ENCODE measurements at regions of chr12 and their contacts with region 1.

Region 1: DNA sequence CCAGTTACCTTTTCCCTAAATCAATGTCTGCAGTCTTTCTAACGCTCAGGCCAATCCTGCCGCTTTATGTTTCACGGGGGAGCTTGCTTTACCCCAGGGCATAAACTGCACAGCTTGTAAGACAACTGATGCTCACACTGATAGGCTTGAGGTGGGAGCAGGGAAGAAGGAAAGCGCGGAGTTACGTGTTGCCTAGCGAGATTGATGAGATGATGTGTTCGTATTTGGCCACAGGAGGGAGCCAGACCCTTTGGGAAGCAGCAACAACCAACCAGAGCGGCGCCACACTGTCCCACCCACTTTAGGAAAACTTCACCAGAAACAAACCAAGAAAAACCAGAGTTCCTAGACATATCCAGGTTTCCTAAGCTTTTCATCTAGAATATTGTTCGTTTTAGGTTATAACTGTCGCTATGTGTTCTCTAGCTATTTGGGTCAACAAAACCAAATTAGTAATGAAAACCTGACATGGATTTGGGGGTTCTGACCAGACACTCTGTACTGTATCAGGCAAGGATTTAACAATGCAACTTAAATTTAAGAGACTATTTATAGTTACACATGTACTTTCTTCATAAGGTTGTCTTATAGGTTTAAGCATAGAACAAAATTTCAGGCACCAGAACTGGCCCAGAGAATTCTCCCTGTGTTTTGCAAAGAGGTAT is 2.4 kb downstream of the IL26 start:
- ATAC-seq: peak; percentile 94 to 100 (median 98)
- H3K4me3 ChIP-seq: no peak overlapping the region
- H3K27ac ChIP-seq: no peak overlapping the region
- H3K4me1 ChIP-seq: no peaks in the 10 kb centered on the region

Region 2: GRCh38 chr12:68303850-68304249 is 80.6 kb after region 1 on chr12:
- in situ Hi-C with region 1: loop called in 1 of 9 experiments (anchors 10 kb)
- ATAC-seq: no peak
- H3K4me3 ChIP-seq: no peak overlapping the region
- H3K27ac ChIP-seq: no peak overlapping the region
- H3K4me1 ChIP-seq: no peaks in the 10 kb centered on the region

Region 3: GRCh38 chr12:68595241-68595640 is 372.0 kb after region 1 on chr12:
- in situ Hi-C with region 1: no loop called
- ATAC-seq: no peak
- H3K4me3 ChIP-seq: no peak overlapping the region
- H3K27ac ChIP-seq: no peak overlapping the region
- H3K4me1 ChIP-seq: no peaks in the 10 kb centered on the region

Measured in motor neuron (in vitro differentiated cells).